ENCODE measurements at regions of chr11 and their contacts with region 1.

Region 1: GRCh38 chr11:114059278-114059983 is at the start of gene ZBTB16:
- DNase-seq: peak; percentile 89 to 95
- ATAC-seq: peak; percentile 85
- H3K4me3 ChIP-seq: peak within 1 kb of the TSS; percentile 84 to 95
- H3K27ac ChIP-seq: peak within 1 kb of the TSS; percentile 90 to 92
- H3K4me1 ChIP-seq: peaks cover 0 to 5% of the 10 kb centered on the region in 2 donors
- H3K27me3 ChIP-seq: no peaks in the 10 kb centered on the region
- total RNA-seq, gene ZBTB16: 54.5 to 283 TPM

Region 2: GRCh38 chr11:114075891-114076441 is 16.5 kb after region 1 on chr11:
- intact Hi-C with region 1: loop called in 1 of 2 experiments (anchors 2 kb)
- DNase-seq: peak; percentile 77 to 86
- ATAC-seq: peak; percentile 8
- H3K4me3 ChIP-seq: no peak overlapping the region
- H3K27ac ChIP-seq: peak overlapping the region; percentile 39 to 92
- H3K4me1 ChIP-seq: peaks cover 5 to 26% of the 10 kb centered on the region in 2 donors
- H3K27me3 ChIP-seq: no peaks in the 10 kb centered on the region

Region 3: DNA sequence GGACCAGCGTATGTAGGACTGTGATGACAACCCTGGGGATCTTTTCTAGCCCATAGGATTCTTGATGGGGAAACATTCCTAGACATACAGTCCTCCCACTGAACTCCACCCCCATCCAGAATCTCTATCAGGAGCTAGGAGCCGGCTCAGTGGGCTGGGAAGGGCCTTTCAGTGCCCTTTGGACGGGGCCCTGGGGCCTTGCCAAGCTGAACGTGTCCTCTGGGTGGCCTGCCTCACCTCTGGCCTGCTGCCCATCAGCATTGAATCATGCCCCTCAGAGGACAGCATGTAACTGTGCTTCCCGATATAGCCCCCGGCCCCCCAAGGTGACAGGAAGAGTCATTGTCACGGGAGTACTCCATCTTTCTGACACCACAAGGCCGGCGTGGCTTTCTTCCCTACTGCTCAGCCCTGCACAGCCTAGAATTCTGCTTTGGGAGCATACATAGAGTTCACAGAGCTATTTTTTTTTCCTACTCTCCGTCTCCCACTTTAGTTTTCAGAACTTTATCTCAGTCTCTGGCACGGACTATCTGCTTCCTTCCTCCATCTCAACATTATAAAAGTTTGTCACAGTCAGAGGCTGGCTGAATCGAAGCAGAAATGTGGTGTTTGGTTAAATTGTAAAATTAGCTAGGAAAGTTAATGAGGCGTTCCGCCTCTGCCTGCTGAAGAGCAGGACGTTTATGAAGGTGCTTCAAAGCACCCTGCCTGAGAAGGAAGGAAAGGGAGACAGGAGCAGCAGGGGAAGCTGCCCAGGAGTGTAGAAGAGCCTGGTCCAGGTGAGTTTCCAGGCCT is 112.0 kb after region 1 on chr11:
- intact Hi-C with region 1: loop called in 1 of 2 experiments (anchors 5 kb)
- DNase-seq: peak; percentile 84 to 96
- ATAC-seq: peak; percentile 78
- H3K4me3 ChIP-seq: no peak overlapping the region
- H3K27ac ChIP-seq: peak overlapping the region; percentile 83 to 99
- H3K4me1 ChIP-seq: peaks cover 30 to 33% of the 10 kb centered on the region in 2 donors
- H3K27me3 ChIP-seq: no peaks in the 10 kb centered on the region

Region 4: GRCh38 chr11:114257621-114258558 is 198.5 kb after region 1 on chr11:
- intact Hi-C with region 1: loop called (anchors 2 to 5 kb)
- DNase-seq: peak; percentile 66 to 87
- ATAC-seq: peak; percentile 47
- H3K4me3 ChIP-seq: no peak overlapping the region
- H3K27ac ChIP-seq: peak overlapping the region; percentile 45 to 68
- H3K4me1 ChIP-seq: peaks cover 0 to 8% of the 10 kb centered on the region in 2 donors
- H3K27me3 ChIP-seq: no peaks in the 10 kb centered on the region